Activated CD4-positive, alpha-beta T cell treated with anti-CD3 and anti-CD28 coated beads for 36 hours (primary cell): ENCODE measurements at regions of chr5 and their contacts with region 1.

Region 1: DNA sequence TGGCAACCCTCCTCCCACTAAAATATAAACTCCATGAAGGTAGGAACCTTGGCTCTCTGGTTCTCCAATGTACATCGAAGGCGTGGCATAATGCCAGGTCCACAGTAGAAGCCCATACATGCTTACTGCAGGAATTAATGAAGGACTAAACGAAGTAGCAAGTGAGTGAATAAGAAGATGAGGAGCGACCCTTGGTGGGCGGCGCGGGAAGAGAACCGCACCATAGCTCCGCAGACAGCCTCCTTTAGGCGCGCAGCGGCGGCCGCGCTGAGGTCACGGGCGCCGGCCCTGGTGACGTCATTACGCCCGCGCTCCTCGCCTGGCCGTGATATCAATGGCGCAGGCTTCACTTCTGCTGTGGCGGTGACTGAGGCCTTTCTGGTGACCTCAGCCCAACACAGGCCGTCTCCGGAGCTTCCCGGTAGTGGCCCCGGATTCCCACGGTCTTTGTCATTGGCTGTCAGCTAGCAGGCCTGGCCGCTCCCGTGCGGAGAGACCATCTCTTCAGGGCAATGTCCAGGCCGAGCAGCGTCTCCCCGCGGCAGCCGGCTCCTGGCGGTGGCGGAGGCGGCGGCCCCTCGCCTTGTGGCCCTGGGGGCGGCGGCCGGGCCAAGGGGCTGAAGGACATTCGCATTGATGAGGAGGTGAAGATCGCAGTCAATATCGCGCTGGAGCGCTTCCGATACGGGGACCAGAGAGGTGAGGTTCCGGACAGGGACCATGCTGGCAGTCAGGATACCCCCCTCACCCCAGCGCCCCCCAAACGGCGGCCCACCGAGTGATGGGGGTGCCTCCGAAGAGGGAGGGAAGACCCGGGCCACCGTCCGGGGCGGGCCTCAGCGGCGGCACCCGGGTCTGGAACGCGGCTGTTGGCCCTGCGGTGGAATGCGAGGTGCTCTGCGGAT is at the start of gene YTHDC2:
- DNase-seq: peak; percentile 94
- ATAC-seq: peak; percentile 98
- H3K4me3 Mint-ChIP-seq: peak within 1 kb of the TSS; percentile 86
- H3K27ac Mint-ChIP-seq: peak within 1 kb of the TSS; percentile 82
- H3K4me1 Mint-ChIP-seq: peaks cover 35% of the 10 kb centered on the region
- H3K27me3 Mint-ChIP-seq: peaks cover 6% of the 10 kb centered on the region
- total RNA-seq, gene YTHDC2: 19.0 to 28.7 TPM

Region 2: GRCh38 chr5:112860929-112861637 is 652.6 kb before region 1 on chr5 and contains the start of gene SRP19:
- CTCF ChIA-PET with region 1: no interaction called
- POLR2A ChIA-PET with region 1: no interaction called
- intact Hi-C with region 1: loop called in 1 of 2 experiments (anchors 2 kb)
- DNase-seq: peak; percentile 95
- ATAC-seq: peak; percentile 95
- H3K4me3 Mint-ChIP-seq: peak within 1 kb of the TSS; percentile 97
- H3K27ac Mint-ChIP-seq: peak within 1 kb of the TSS; percentile 98
- H3K4me1 Mint-ChIP-seq: peaks cover 32% of the 10 kb centered on the region
- H3K27me3 Mint-ChIP-seq: peaks cover 9% of the 10 kb centered on the region
- total RNA-seq, gene SRP19: 47.6 to 49.4 TPM

Region 3: GRCh38 chr5:112995764-112996618 is 517.6 kb before region 1 on chr5:
- CTCF ChIA-PET with region 1: interaction called, 5 read pairs
- POLR2A ChIA-PET with region 1: no interaction called
- intact Hi-C with region 1: loop called in 1 of 2 experiments (anchors 1 kb)
- DNase-seq: peak; percentile 84
- ATAC-seq: peak; percentile 71
- H3K4me3 Mint-ChIP-seq: no peak overlapping the region
- H3K27ac Mint-ChIP-seq: no peak overlapping the region
- H3K4me1 Mint-ChIP-seq: peaks cover 17% of the 10 kb centered on the region
- H3K27me3 Mint-ChIP-seq: no peaks in the 10 kb centered on the region

Region 4: GRCh38 chr5:113294311-113295110 is 219.1 kb before region 1 on chr5:
- CTCF ChIA-PET with region 1: interaction called, 3 read pairs
- POLR2A ChIA-PET with region 1: no interaction called
- intact Hi-C with region 1: loop called in 1 of 2 experiments (anchors 2 kb)
- DNase-seq: peak; percentile 89
- ATAC-seq: peak; percentile 96
- H3K4me3 Mint-ChIP-seq: peak overlapping the region; percentile 78
- H3K27ac Mint-ChIP-seq: peak overlapping the region; percentile 61
- H3K4me1 Mint-ChIP-seq: peaks cover 15% of the 10 kb centered on the region
- H3K27me3 Mint-ChIP-seq: peaks cover 38% of the 10 kb centered on the region

Region 5: DNA sequence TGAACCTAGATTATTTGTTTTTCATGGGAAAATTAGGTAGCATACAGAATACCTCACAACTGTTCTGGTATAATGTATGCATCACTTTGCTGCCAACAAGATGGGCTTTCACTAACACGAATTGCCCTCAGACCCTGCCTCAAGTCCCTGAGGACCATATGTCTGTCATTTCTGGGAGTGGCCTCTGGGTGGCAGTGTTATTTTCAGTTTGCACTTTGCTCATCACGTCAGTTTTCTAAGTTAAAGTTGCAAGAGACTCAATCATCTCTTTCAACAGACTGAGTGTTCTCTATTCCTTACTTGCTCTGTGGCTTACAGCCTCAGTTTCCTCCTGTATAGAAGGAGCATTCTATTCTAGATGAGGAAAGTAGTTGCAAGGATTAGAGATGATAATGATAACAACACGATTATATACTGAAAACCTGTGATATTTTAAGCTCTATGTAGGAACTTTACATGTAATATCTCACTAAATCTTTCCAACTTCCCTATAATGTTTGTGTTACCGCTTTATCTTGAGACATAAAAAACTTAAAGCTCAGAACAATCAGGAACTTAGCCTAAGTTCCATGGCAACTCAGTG is 134.6 kb before region 1 on chr5:
- CTCF ChIA-PET with region 1: interaction called, 11 read pairs
- POLR2A ChIA-PET with region 1: no interaction called
- intact Hi-C with region 1: loop called (anchors 1 kb)
- DNase-seq: peak; percentile 75
- ATAC-seq: peak; percentile 74
- H3K4me3 Mint-ChIP-seq: no peak overlapping the region
- H3K27ac Mint-ChIP-seq: no peak overlapping the region
- H3K4me1 Mint-ChIP-seq: peaks cover 31% of the 10 kb centered on the region
- H3K27me3 Mint-ChIP-seq: peaks cover 15% of the 10 kb centered on the region